B cell (primary cell): ENCODE measurements at regions of chr6 and their contacts with region 1.

Region 1: DNA sequence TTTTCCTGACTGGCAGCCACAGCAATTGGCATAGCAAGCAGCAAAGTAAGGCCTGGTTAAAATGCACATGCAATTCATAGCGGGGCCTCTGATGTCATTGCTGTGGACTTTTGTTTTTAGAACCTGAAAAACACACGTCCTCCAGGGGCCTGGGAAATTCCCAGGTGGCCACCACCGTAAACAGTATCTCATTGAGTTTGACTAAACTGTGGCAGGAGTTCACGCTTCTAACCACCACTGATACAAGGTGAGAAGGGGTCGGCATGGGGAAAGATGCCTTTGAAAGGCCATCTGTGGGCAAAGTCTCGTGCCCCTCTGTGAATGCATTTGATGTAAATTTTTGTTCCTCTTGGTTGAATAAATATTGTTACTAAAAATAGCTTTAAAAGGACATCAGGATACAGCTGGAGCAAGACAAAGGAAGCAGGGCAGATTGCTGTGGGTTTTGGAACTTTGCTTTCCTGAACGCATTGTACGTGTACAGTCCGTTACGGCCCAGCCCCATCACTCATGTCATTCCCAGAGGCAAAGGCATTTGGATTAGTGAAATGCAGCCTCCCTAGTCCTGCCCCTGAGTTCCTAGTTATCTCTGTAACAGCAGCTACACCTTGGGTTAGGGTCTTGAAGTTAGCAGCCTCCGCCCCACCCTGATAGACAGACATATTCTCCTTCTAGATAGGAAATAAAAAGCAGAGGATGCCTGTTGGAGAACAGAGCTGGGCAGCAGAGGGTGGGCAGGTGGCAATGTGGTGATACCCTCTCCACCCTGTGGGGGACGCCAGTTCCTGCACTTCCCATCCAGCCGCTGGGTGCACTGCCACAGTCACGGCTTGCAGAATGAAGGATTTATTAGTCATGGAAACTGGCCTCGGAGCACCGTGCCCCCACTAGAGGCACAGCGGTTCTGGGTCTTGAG is 80.3 kb downstream of the ZDHHC14 start:
- DNase-seq: peak; percentile 84
- ATAC-seq: peak; percentile 67
- H3K4me3 ChIP-seq: peak overlapping the region in 1 of 5 experiments; percentile 30
- H3K4me3 Mint-ChIP-seq: peak overlapping the region; percentile 71
- H3K27ac ChIP-seq: peak overlapping the region; percentile 36 to 53
- H3K27ac Mint-ChIP-seq: peak overlapping the region; percentile 94
- H3K4me1 ChIP-seq: peaks cover 60 to 77% of the 10 kb centered on the region in 2 donors
- H3K4me1 Mint-ChIP-seq: peaks cover 73% of the 10 kb centered on the region
- H3K27me3 ChIP-seq: no peaks in the 10 kb centered on the region
- H3K27me3 Mint-ChIP-seq: no peaks in the 10 kb centered on the region
- CTCF ChIP-seq: peak; percentile 31

Region 2: DNA sequence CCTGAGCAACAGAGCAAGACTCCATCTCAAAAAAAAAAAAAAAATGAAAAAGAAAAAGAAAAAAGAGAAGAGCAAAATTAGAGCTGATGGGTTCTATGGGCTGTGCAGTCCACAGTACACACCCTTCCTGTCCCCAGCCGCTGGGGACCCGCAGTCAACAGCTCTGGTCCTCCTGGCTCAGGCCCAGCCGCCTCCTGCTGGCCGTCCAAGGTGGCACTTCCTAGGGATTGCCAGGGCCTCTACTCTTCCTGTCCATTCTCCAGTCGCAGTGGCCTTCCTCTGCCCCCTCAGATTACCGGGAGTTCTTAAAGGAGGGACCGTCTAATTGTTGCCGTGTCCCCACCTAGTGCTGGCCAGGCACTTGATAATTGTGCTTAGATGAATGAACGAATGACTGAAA is 179.7 kb before region 1 on chr6:
- CTCF ChIA-PET with region 1: no interaction called
- POLR2A ChIA-PET with region 1: no interaction called
- intact Hi-C with region 1: no loop called
- DNase-seq: no peak
- ATAC-seq: no peak
- H3K4me3 ChIP-seq: no peak overlapping the region
- H3K4me3 Mint-ChIP-seq: no peak overlapping the region
- H3K27ac ChIP-seq: no peak overlapping the region
- H3K27ac Mint-ChIP-seq: no peak overlapping the region
- H3K4me1 ChIP-seq: no peaks in the 10 kb centered on the region
- H3K4me1 Mint-ChIP-seq: peaks cover 2% of the 10 kb centered on the region
- H3K27me3 ChIP-seq: no peaks in the 10 kb centered on the region
- H3K27me3 Mint-ChIP-seq: no peaks in the 10 kb centered on the region
- CTCF ChIP-seq: no peak

Region 3: DNA sequence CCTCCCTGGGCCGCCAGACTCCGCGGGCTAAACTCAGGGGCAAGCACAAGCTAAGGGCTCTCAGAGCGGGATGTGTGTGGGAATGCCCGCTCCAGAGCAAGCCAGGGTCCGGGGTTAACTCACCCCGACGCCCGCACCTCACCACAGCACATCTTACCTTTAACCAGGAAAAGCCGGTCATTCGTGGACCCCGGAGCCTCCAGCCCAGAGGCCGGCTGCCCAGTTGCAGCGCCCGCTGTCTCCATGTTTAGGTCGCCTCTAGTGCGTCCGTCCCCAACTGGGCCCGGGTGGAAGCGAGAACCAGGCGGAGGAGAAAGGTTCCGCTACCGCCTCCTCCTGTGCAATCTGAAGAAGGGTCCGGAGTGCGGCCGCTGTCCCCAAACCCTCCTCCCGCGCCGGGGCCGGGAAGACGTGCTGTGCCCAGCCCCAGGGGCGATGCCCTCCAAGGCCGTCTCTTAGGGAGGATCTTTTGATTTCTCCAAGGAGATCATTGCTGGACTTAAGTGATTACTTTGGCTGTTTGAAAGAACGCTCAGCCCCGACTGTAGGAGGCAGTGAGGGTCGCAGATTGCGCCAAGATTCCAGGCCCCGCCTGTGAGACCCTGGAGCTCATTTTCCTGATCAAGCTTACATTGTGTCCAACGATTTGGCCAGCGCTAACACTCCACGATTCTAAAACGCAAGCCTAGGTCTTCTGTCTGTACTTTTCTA is 137.8 kb before region 1 on chr6 and contains the start of gene TMEM242:
- CTCF ChIA-PET with region 1: interaction called, 11 read pairs
- POLR2A ChIA-PET with region 1: interaction called, 3 read pairs
- intact Hi-C with region 1: loop called (anchors 5 kb)
- DNase-seq: peak; percentile 93
- ATAC-seq: peak; percentile 92
- H3K4me3 ChIP-seq: peak within 1 kb of the TSS; percentile 61 to 93 (median 82)
- H3K4me3 Mint-ChIP-seq: peak within 1 kb of the TSS; percentile 97
- H3K27ac ChIP-seq: peak within 1 kb of the TSS; percentile 36 to 76
- H3K27ac Mint-ChIP-seq: peak within 1 kb of the TSS; percentile 92
- H3K4me1 ChIP-seq: peaks cover 10 to 11% of the 10 kb centered on the region in 2 donors
- H3K4me1 Mint-ChIP-seq: peaks cover 14% of the 10 kb centered on the region
- H3K27me3 ChIP-seq: peaks cover 0 to 13% (median 5%) of the 10 kb centered on the region in 4 experiments
- H3K27me3 Mint-ChIP-seq: peaks cover 29% of the 10 kb centered on the region
- CTCF ChIP-seq: peak; percentile 42
- total RNA-seq, gene TMEM242: 24.1 and 25.0 TPM in 2 replicates

Region 4: DNA sequence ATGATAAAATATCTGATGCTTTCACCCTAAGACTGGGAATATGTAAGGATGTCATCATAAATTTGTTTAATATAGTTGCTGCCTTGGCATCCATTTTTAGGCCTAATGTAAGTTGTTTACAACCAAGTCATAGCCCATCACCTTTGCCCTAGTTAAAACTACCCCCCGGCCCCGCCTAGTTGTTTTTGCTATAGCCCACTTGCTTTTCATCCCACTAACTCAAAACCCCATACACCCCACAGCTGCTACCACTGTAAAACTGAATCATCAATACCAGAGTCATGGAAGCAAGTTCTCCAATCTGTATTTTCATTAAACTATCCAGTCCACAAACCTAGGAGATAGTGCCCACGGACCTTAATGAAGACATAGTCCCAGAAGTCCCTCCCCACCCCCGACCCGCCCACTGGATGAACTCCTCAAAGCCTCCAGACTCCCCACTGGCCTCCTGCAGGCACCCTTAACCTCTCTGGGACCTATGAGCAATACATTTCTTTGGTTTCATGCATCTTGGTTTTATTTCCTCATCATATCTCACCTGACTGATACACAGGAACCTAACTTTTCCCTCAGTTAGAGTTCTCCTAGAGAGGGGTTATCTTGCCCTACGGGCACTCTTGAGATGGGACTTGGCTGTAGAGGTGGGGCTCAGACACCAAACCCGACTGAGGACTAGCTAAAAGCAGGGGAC is 92.8 kb before region 1 on chr6:
- CTCF ChIA-PET with region 1: no interaction called
- POLR2A ChIA-PET with region 1: no interaction called
- intact Hi-C with region 1: loop called (anchors 2 kb)
- DNase-seq: peak; percentile 19
- ATAC-seq: peak; percentile 29
- H3K4me3 ChIP-seq: no peak overlapping the region
- H3K4me3 Mint-ChIP-seq: peak overlapping the region; percentile 26
- H3K27ac ChIP-seq: no peak overlapping the region
- H3K27ac Mint-ChIP-seq: peak overlapping the region; percentile 54
- H3K4me1 ChIP-seq: peaks cover 22 to 23% of the 10 kb centered on the region in 2 donors
- H3K4me1 Mint-ChIP-seq: peaks cover 18% of the 10 kb centered on the region
- H3K27me3 ChIP-seq: peaks cover 2 to 50% (median 41%) of the 10 kb centered on the region in 4 experiments
- H3K27me3 Mint-ChIP-seq: peaks cover 52% of the 10 kb centered on the region
- CTCF ChIP-seq: no peak

Region 5: DNA sequence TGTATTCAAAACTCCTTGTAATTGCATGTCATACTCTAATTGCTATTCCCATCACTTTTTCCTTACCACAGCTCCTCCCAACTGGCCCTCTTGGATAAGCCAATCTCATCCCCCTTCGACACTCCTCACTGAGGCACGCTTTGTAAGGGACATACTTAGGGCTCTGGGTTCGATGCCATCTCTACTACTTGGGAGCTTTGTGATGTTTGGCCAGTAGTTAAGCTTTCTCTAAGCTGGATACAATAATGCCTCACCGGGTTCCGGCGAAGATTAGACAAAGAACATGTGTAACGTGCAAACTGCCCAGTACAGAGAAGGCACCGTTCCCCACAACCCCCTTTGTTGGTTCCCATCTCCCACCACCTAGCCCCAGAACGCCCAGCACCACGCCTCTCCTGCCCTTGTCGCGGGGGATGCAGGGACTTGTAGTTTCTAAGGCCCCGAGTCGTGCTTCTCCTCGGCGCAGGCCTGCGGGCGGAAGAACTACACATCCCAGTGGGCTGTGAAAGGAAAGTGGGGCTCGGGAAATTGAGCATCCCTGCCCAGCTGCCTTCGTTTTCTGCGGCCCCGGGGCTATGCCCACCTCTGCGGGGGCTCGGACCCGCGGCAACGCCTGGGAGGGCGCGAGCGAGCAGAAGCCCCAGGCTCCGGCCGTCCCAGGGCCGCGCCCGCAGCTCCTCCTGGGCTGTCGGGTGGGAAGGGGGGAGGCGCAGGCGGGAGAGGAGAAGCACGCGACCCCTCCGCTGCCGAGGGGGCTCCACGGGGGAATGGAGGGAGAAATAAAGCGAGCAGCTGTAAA is 81.4 kb before region 1 on chr6:
- CTCF ChIA-PET with region 1: interaction called, 4 read pairs
- POLR2A ChIA-PET with region 1: interaction called, 12 read pairs
- intact Hi-C with region 1: loop called (anchors 2 kb)
- DNase-seq: peak; percentile 90
- ATAC-seq: peak; percentile 74
- H3K4me3 ChIP-seq: peak overlapping the region; percentile 42 to 99 (median 93)
- H3K4me3 Mint-ChIP-seq: peak overlapping the region; percentile 80
- H3K27ac ChIP-seq: peak overlapping the region; percentile 55 to 80
- H3K27ac Mint-ChIP-seq: peak overlapping the region; percentile 69
- H3K4me1 ChIP-seq: peaks cover 24 to 32% of the 10 kb centered on the region in 2 donors
- H3K4me1 Mint-ChIP-seq: peaks cover 26% of the 10 kb centered on the region
- H3K27me3 ChIP-seq: peaks cover 0 to 12% (median 5%) of the 10 kb centered on the region in 4 experiments
- H3K27me3 Mint-ChIP-seq: peaks cover 8% of the 10 kb centered on the region
- CTCF ChIP-seq: no peak

Region 6: DNA sequence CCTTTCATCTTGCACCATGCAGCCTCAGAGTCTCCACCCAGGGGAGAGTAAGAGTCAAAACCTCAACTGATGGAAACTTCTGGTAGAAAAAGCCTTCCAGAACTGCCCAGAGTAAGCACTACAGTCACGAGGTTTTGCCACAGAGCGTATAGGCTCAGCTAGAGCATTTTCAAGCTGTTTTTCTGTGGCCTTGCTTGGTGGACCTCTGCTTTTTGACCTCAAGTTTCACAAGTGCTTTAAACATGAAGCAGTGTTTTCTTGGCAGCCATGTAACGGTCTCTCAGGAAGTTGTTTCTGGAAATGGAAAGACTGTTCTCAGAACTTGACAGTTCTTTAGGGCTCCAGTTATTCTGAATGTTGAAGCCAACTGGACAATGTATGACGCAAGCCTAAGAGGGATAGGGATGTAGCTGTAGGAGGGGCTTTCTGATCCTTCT is 66.2 kb after region 1 on chr6:
- CTCF ChIA-PET with region 1: interaction called, 5 read pairs
- POLR2A ChIA-PET with region 1: no interaction called
- intact Hi-C with region 1: loop called (anchors 10 kb)
- DNase-seq: no peak
- ATAC-seq: peak; percentile 73
- H3K4me3 ChIP-seq: no peak overlapping the region
- H3K4me3 Mint-ChIP-seq: peak overlapping the region; percentile 21
- H3K27ac ChIP-seq: no peak overlapping the region
- H3K27ac Mint-ChIP-seq: peak overlapping the region; percentile 23
- H3K4me1 ChIP-seq: peaks cover 21 to 44% of the 10 kb centered on the region in 2 donors
- H3K4me1 Mint-ChIP-seq: peaks cover 45% of the 10 kb centered on the region
- H3K27me3 ChIP-seq: no peaks in the 10 kb centered on the region
- H3K27me3 Mint-ChIP-seq: no peaks in the 10 kb centered on the region
- CTCF ChIP-seq: no peak

Region 7: GRCh38 chr6:157597446-157598312 is 136.4 kb after region 1 on chr6:
- CTCF ChIA-PET with region 1: interaction called, 8 read pairs
- POLR2A ChIA-PET with region 1: interaction called, 13 read pairs
- intact Hi-C with region 1: loop called (anchors 10 kb)
- DNase-seq: peak; percentile 53
- ATAC-seq: peak; percentile 69
- H3K4me3 ChIP-seq: no peak overlapping the region
- H3K4me3 Mint-ChIP-seq: peak overlapping the region; percentile 7
- H3K27ac ChIP-seq: no peak overlapping the region
- H3K27ac Mint-ChIP-seq: peak overlapping the region; percentile 81
- H3K4me1 ChIP-seq: peaks cover 31 to 52% of the 10 kb centered on the region in 2 donors
- H3K4me1 Mint-ChIP-seq: peaks cover 50% of the 10 kb centered on the region
- H3K27me3 ChIP-seq: no peaks in the 10 kb centered on the region
- H3K27me3 Mint-ChIP-seq: no peaks in the 10 kb centered on the region
- CTCF ChIP-seq: peak; percentile 48

Region 8: DNA sequence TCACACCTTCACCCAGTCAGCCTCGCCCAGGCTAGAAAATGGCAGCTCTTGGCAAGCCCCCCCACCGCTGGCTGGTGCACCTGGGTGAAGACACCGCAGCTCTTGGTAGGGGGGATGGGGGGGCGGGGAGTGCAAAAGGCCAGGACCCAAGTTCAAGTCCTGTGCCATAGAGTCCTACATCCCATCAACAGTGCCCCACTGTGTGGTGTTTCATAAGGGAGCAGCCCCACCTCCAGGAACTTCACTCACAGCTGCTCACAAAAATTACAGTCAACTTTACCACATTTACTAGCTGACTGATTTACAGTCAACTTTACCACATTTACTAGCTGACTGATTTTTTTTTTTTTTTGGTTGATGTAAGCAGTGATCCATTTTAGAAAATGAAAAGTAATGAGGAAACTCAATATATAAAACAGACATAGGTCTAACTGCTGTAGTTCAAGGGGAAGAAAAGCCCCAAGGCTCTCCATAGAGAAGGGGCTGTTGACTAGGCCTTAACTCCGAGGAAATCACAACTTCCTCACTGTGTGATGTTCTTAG is 152.8 kb after region 1 on chr6:
- CTCF ChIA-PET with region 1: interaction called, 8 read pairs
- POLR2A ChIA-PET with region 1: interaction called, 7 read pairs
- intact Hi-C with region 1: loop called (anchors 2 kb)
- DNase-seq: peak; percentile 65
- ATAC-seq: peak; percentile 64
- H3K4me3 ChIP-seq: no peak overlapping the region
- H3K4me3 Mint-ChIP-seq: peak overlapping the region; percentile 67
- H3K27ac ChIP-seq: peak overlapping the region; percentile 57 to 68
- H3K27ac Mint-ChIP-seq: peak overlapping the region; percentile 83
- H3K4me1 ChIP-seq: peaks cover 36 to 67% of the 10 kb centered on the region in 2 donors
- H3K4me1 Mint-ChIP-seq: peaks cover 59% of the 10 kb centered on the region
- H3K27me3 ChIP-seq: no peaks in the 10 kb centered on the region
- H3K27me3 Mint-ChIP-seq: no peaks in the 10 kb centered on the region
- CTCF ChIP-seq: no peak